ENCODE measurements at regions of chr17 and their contacts with region 1.

Region 1: DNA sequence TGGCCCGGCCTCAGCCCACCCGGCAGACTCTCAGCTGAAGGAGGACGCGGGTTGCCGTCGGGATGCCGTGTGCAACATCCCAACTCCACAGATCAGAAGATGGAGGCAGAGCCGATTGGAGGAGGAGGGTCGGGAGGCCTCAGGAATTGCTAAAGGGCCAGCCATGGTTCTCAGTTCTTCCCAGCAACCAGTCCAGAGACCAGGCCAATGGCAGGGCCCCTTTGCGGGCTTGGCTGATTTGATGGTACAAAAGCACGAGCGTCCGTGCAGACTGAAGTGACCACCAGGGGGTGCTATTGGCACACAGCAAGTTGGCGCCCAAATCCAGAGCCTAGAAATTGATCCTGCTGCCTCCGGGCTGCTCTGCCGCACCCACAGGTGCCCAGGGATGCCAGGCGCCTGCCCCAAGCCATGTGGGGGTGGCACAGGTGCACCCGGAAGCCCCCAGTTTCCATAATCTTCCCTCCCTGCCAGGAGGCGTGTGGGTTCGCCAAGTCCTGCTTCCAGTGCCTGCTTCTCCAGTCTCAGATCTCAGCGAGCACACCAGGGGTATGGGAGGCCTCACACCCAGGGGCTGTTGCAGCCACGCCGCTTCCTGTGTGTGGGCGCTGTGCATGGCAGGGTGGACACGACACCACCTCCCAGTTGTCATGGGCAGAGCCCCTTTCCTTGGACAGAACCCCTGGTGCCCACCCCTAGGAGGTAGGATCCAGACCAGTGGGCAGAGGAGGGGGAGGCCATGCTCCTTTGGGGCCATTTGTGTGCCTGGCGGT is 7.1 kb upstream of the TEX19 start:
- DNase-seq: peak; percentile 89
- H3K4me3 Mint-ChIP-seq: no peak overlapping the region
- H3K27ac Mint-ChIP-seq: no peak overlapping the region
- H3K4me1 Mint-ChIP-seq: no peaks in the 10 kb centered on the region
- H3K27me3 Mint-ChIP-seq: no peaks in the 10 kb centered on the region

Region 2: DNA sequence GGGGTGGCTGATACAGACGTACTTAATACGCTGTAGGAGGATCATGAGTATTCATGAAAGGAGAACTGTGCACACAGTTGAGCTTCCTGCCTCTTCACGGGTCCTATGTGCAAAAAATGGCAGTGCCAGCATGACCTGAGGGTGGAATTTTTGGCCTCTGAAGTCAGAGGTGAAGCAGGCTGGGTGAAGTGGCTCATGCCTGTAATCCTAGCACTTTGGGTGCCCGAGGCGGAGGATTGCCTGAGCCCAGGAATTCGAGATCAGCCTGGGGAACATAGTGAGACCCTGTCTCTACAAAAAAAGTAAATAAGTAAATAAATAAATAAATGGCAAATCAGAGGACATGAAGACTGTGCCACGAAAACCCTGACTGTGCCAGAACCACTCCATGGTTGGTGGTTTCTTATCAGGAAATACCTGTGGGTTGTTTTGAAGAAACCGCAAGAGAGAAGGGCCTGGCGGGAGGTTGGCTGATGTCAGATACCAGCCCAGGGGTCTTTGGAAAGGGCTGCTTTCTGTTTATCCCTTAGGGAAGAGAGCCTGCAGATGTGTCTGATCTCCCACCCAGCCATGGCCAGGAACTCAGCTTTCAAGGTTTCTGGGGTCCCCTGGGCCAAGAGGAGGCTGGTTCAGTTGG is 371.1 kb before region 1 on chr17:
- CTCF ChIA-PET with region 1: no interaction called
- intact Hi-C with region 1: no loop called
- DNase-seq: no peak
- H3K4me3 Mint-ChIP-seq: no peak overlapping the region
- H3K27ac Mint-ChIP-seq: no peak overlapping the region
- H3K4me1 Mint-ChIP-seq: peaks cover 40% of the 10 kb centered on the region
- H3K27me3 Mint-ChIP-seq: no peaks in the 10 kb centered on the region

Region 3: DNA sequence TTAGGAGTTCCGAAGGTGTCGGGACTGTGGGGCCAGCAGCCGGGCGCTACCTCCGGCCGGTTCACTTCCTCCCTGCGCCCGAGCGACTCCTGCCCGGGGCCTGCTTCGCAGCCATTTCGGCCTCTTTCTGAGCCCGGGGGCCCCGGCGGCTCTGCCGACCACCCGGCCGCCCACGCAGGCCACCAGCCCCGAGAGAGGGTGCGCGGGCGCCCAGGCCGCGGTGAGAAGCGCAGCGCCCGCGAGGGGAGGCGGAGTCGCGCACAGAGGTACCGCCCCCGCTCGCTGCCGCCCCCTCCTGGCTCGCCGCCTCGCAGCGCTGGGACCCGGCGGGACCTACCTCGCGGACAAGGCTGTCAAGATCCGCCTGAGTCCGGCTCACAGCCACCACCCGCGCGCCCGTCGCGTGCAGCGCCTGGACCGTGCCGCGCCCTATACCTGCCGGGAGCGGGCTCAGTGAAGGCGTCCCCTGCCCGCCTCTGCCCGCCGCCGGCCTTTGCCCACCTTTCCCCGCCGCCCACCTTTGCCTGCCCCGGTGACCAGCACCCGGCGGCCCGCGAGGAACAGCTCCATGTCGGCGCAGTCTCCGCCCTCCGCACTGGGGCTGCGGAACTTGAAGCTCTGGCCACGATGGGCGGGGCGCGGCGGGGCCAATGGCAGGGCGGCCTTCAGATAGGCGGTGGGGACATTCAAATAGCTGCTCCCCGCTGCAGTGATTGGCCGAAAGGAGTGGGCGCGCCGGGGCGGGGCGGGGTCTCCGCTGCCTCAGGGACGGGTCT is 314.6 kb before region 1 on chr17 and contains the start of gene DCXR:
- CTCF ChIA-PET with region 1: no interaction called
- intact Hi-C with region 1: loop called (anchors 10 kb)
- DNase-seq: peak; percentile 96
- H3K4me3 Mint-ChIP-seq: peak within 1 kb of the TSS; percentile 85
- H3K27ac Mint-ChIP-seq: peak within 1 kb of the TSS; percentile 82
- H3K4me1 Mint-ChIP-seq: peaks cover 22% of the 10 kb centered on the region
- H3K27me3 Mint-ChIP-seq: no peaks in the 10 kb centered on the region
- total RNA-seq, gene DCXR: 139 to 146 TPM

Region 4: DNA sequence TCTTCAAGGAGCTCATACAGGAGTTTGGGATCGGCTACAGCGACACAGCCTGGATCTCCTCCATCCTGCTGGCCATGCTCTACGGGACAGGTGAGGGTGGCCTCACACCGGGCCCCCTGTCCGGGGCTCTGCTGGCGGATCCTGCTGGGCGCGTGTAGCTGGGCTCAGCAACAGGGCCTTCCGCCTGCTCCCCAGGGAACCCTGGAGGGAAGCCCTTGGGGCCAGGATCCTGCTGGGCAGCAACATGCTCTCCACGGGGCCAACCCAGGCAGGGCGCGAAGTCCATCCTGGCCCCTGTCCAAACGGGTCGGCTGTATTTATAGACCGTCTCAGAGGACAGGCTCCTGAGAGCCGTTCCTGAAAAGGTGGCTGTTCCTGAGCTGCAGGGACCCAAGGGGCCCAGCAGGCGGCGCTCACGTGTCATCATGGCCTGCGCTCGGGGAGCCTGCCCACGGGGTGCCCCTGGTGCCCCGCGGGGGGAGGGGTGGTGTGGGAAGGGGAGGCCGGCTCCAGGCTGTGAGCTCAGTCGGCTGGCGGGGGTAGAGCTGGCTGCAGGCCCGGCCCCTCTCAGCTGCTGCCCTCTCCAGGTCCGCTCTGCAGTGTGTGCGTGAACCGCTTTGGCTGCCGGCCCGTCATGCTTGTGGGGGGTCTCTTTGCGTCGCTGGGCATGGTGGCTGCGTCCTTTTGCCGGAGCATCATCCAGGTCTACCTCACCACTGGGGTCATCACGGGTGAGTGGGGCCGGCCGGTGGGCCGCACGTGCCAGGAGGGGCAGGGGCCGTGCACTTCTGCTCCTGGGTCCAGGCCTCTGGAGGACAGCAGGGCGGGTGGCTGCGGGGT is 115.5 kb before region 1 on chr17:
- CTCF ChIA-PET with region 1: interaction called, 34 read pairs
- intact Hi-C with region 1: loop called (anchors 1 kb)
- DNase-seq: peak; percentile 78
- H3K4me3 Mint-ChIP-seq: no peak overlapping the region
- H3K27ac Mint-ChIP-seq: no peak overlapping the region
- H3K4me1 Mint-ChIP-seq: peaks cover 30% of the 10 kb centered on the region
- H3K27me3 Mint-ChIP-seq: no peaks in the 10 kb centered on the region

Region 5: DNA sequence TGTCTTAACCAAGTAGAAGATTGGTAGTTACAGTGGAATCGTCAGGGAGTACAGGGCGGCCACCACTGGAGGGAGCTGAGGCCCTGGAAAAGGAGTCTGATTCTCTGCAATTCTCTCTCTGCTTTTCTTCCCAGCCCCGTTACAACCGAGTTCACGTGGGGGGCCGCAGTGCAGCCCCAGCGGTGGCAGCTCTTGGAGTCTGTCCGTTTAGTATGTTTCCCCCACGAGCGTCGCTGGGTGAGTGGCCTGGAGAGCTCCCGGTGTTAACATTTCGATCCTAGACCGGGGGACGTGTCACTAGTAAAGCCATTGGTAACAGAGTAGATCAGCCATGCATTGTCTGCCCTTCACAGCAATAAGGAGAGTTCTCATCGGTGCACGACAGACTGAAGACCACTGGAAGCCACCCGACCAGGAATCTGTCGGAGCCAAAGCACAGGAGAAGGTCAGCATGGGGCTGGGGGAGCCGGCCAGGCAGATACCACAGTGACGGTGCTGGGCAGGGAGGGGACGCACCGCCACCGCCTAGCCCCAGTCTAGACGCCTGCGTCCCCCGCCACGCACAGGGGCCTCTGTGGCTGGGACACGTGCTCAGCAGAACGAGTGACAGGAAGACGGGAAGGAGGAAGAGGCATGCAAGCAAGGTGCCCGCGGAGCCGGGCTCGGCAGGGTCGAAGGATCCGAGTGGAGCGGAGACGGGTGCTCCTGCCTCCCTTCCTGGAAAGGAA is 107.3 kb before region 1 on chr17:
- CTCF ChIA-PET with region 1: interaction called, 4 read pairs
- intact Hi-C with region 1: loop called (anchors 1 kb)
- DNase-seq: peak; percentile 54
- H3K4me3 Mint-ChIP-seq: no peak overlapping the region
- H3K27ac Mint-ChIP-seq: peak overlapping the region; percentile 13
- H3K4me1 Mint-ChIP-seq: peaks cover 36% of the 10 kb centered on the region
- H3K27me3 Mint-ChIP-seq: no peaks in the 10 kb centered on the region

Region 6: GRCh38 chr17:82551779-82552457 is 200.0 kb after region 1 on chr17:
- CTCF ChIA-PET with region 1: interaction called, 5 read pairs
- intact Hi-C with region 1: loop called (anchors 2 kb)
- DNase-seq: peak; percentile 90
- H3K4me3 Mint-ChIP-seq: no peak overlapping the region
- H3K27ac Mint-ChIP-seq: peak overlapping the region; percentile 54
- H3K4me1 Mint-ChIP-seq: peaks cover 32% of the 10 kb centered on the region
- H3K27me3 Mint-ChIP-seq: no peaks in the 10 kb centered on the region

Region 7: GRCh38 chr17:82767041-82767754 is 415.3 kb after region 1 on chr17:
- CTCF ChIA-PET with region 1: no interaction called
- intact Hi-C with region 1: loop called (anchors 5 kb)
- DNase-seq: peak; percentile 75
- H3K4me3 Mint-ChIP-seq: no peak overlapping the region
- H3K27ac Mint-ChIP-seq: no peak overlapping the region
- H3K4me1 Mint-ChIP-seq: peaks cover 11% of the 10 kb centered on the region
- H3K27me3 Mint-ChIP-seq: no peaks in the 10 kb centered on the region